ENCODE measurements at regions of chr1 and their contacts with region 1.

Region 1: DNA sequence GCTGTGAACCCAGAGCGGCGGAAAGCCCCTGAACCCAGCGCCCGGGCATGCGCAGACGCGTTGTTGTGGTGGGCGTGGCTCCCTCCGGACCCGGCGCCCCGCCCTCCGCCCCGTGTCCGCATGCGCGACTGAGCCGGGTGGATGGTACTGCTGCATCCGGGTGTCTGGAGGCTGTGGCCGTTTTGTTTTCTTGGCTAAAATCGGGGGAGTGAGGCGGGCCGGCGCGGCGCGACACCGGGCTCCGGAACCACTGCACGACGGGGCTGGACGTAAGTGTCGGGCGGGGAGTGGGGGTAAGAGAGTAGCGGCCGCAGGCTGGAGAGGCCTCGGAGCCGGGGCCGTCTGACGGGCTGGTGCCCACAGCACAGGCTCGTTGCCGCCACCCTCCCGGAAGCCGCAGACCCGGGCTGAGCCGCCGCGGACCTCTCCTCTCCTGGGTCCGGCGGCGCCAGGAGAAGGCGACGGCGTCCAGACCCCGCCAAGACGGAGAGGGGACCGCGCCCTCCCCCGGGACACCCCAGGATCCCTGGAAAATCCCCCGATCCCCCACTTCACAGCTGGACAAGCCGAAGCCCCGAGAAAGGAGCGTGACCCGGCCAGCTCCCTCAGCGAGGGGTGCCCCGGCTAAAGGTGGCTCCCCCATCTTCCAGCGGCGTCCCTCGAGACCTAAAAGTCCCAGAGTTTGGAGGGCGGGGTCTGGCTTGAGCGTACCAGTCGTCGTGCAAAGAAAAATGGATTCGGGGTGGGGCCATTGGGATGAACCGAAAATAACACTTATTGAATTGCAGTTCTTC is at the start of gene TMEM50A:
- DNase-seq: peak; percentile 77 to 90
- ATAC-seq: peak; percentile 89 to 93
- H3K4me3 ChIP-seq: peak within 1 kb of the TSS; percentile 79 to 96 (median 94)
- H3K27ac ChIP-seq: peak within 1 kb of the TSS; percentile 95 to 100 (median 96)
- H3K4me1 ChIP-seq: peaks cover 17 to 20% of the 10 kb centered on the region in 2 donors
- H3K27me3 ChIP-seq: no peaks in the 10 kb centered on the region
- CTCF ChIP-seq: no peak
- POLR2A ChIP-seq: peak; percentile 79 to 91
- total RNA-seq, gene TMEM50A: 28.4 to 47.9 (median 43.0) TPM

Region 2: GRCh38 chr1:25232027-25232865 is 106.1 kb before region 1 on chr1 and contains the start of gene SYF2:
- in situ Hi-C with region 1: loop called in 1 of 4 experiments (anchors 5 kb)
- intact Hi-C with region 1: loop called (anchors 5 kb)
- DNase-seq: peak; percentile 90 to 93
- ATAC-seq: peak; percentile 84 to 90
- H3K4me3 ChIP-seq: peak within 1 kb of the TSS; percentile 61 to 89 (median 78)
- H3K27ac ChIP-seq: peak within 1 kb of the TSS; percentile 86 to 97 (median 92)
- H3K4me1 ChIP-seq: peaks cover 35 to 43% of the 10 kb centered on the region in 2 donors
- H3K27me3 ChIP-seq: no peaks in the 10 kb centered on the region
- CTCF ChIP-seq: no peak
- POLR2A ChIP-seq: peak; percentile 81 to 85
- total RNA-seq, gene SYF2: 49.1 to 67.4 (median 58.3) TPM

Region 3: DNA sequence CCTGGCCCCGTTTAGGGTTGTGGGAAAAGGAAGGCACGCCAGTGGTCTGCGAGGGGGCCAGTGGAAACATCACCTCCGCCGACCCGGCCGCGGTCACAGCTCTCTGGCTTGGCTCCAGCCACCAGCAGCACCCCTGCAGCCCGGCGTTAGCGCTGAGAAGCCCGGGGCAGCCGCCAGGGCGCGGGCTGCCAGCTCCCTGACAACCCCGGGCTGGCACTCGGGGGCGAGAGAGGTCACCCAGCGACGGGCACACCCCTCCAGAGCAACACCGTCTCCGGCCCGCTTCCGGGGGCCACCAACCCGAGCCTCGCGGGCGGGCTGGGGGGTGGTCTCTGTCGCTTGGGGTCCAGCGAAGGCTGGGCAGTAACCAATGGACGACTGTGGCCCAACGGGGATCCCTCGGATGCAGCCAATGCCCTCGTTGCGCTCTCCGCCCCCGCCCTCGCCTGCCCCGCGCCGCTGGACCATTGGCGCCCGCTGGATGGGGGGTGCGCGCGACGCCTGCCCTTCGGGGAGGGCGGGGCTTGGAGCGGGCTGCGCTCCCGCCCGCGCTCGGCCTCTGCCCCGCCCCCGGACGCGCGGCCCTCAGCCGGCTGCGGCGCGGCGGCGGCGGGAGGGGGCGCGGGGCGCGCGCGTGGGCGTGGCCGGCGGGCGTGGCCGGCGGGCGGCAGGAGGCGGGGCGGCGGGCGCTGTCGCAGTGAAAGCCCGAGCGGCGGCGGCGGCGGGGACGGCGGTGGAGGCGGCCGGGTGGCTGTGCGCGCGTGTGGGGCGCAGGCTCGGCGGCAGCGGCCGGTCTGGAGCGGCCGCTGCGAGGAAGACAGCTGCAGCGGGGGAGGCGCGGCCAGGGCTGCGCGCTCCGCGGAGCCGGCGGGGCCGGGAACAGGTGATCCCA is 278.0 kb after region 1 on chr1 and contains the start of gene MAN1C1:
- in situ Hi-C with region 1: no loop called
- intact Hi-C with region 1: no loop called
- DNase-seq: peak; percentile 61 to 74
- ATAC-seq: peak; percentile 83 to 84
- H3K4me3 ChIP-seq: peak within 1 kb of the TSS; percentile 72 to 97 (median 90)
- H3K27ac ChIP-seq: peak within 1 kb of the TSS; percentile 81 to 92 (median 84)
- H3K4me1 ChIP-seq: peaks cover 20 to 26% of the 10 kb centered on the region in 2 donors
- H3K27me3 ChIP-seq: no peaks in the 10 kb centered on the region
- CTCF ChIP-seq: peak; percentile 49 to 62 (median 54)
- POLR2A ChIP-seq: peak; percentile 70 to 75
- total RNA-seq, gene MAN1C1: 2.0 to 4.4 (median 2.5) TPM